ENCODE measurements at regions of chr10 and their contacts with region 1.

Region 1: GRCh38 chr10:60147025-60147424 is 240.7 kb upstream of the CCDC6 start:
- DNase-seq: no peak
- ATAC-seq: no peak
- H3K4me3 Mint-ChIP-seq: no peak overlapping the region
- H3K27ac Mint-ChIP-seq: no peak overlapping the region
- H3K4me1 Mint-ChIP-seq: peaks cover 2% of the 10 kb centered on the region
- H3K27me3 Mint-ChIP-seq: no peaks in the 10 kb centered on the region

Region 2: GRCh38 chr10:60123172-60124067 is 23.6 kb before region 1 on chr10:
- CTCF ChIA-PET with region 1: no interaction called
- POLR2A ChIA-PET with region 1: no interaction called
- intact Hi-C with region 1: loop called in 1 of 2 experiments (anchors 2 kb)
- DNase-seq: no peak
- ATAC-seq: no peak
- H3K4me3 Mint-ChIP-seq: no peak overlapping the region
- H3K27ac Mint-ChIP-seq: no peak overlapping the region
- H3K4me1 Mint-ChIP-seq: no peaks in the 10 kb centered on the region
- H3K27me3 Mint-ChIP-seq: no peaks in the 10 kb centered on the region

Region 3: GRCh38 chr10:60167050-60167449 is 20.0 kb after region 1 on chr10:
- CTCF ChIA-PET with region 1: no interaction called
- POLR2A ChIA-PET with region 1: no interaction called
- intact Hi-C with region 1: no loop called
- DNase-seq: no peak
- ATAC-seq: no peak
- H3K4me3 Mint-ChIP-seq: no peak overlapping the region
- H3K27ac Mint-ChIP-seq: no peak overlapping the region
- H3K4me1 Mint-ChIP-seq: no peaks in the 10 kb centered on the region
- H3K27me3 Mint-ChIP-seq: no peaks in the 10 kb centered on the region